H1 (cell line): ENCODE measurements at regions of chr11 and their contacts with region 1.

Region 1: DNA sequence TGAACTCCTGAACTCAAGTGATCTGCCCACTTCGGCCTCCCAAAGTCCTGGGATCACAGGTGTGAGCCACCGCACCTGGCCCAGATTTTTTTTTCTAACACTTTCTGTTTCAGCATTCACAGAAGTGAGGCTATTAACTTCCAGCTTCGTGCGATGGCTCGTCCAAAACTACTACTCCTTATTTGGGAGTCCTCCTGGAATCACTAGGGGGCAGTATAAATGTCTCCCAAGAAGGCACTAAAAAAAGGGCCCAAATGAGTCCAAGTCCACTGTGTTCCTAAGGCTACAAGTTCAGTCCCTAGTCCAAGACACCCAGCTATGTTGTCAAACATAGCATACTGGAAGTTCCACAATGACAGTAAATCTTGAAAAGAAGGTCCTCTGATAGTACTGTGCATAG is 63.2 kb upstream of the BIRC3 start:
- DNase-seq: no peak
- H3K4me3 ChIP-seq: no peak overlapping the region
- H3K27ac ChIP-seq: no peak overlapping the region
- H3K4me1 ChIP-seq: no peaks in the 10 kb centered on the region; a peak in 1 of 7 replicates
- H3K27me3 ChIP-seq: no peaks in the 10 kb centered on the region
- CTCF ChIP-seq: peak in 2 of 3 experiments; percentile 40 to 64; a peak in 2 of 4 replicates
- EP300 ChIP-seq: no peak
- POLR2A ChIP-seq: no peak
- RAD21 ChIP-seq: peak; percentile 44 to 47

Region 2: GRCh38 chr11:101860696-101861427 is 393.2 kb before region 1 on chr11:
- CTCF ChIA-PET with region 1: no interaction called
- POLR2A ChIA-PET with region 1: no interaction called
- DNase-seq: peak in 1 of 2 experiments; percentile 29
- H3K4me3 ChIP-seq: no peak overlapping the region
- H3K27ac ChIP-seq: no peak overlapping the region
- H3K4me1 ChIP-seq: no peaks in the 10 kb centered on the region
- H3K27me3 ChIP-seq: no peaks in the 10 kb centered on the region
- CTCF ChIP-seq: peak; percentile 46 to 74 (median 69)
- EP300 ChIP-seq: no peak
- POLR2A ChIP-seq: no peak
- RAD21 ChIP-seq: peak; percentile 61 to 68

Region 3: DNA sequence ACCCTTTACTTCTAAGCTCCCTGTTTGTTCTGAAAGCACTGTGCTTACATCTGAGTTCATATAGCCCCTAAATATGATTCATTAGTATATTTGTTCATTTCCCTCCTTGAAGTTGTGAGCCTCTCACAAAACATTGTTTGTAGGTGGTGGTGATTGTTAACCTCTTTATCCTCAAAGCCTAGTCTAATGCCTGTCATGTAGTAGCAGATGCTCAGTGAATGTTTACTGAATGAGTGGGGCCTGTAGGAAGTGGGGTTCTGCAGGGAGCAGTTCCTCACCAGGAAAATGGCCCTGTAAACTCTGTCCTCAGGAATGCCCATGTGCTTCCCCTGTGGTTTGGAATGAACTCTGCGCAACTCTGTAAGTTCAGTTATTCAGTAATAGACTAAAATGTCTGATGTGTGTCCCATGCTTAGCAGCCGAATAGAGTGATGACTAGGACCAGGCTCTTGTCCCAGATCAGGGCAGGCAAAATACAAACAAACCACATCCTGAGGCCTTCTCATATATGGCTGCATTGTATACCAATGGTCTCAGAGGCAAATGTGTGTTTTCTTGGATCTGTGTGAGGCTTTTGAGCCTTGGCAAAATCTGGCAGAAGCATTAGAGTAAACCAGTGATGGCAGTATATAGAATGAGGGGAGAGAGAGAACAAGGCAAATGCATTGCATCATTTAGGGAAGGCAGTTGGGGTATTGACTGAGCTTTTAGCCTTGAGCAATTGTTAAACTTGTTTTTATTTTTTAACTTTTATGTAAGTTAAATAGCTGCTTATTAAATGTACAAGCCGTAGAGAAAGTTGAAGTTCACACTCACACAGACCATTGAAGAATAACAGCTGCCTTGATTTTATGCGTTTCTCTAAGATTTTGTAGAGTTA is 28.1 kb before region 1 on chr11:
- CTCF ChIA-PET with region 1: interaction called, 12 read pairs
- POLR2A ChIA-PET with region 1: no interaction called
- DNase-seq: no peak
- H3K4me3 ChIP-seq: no peak overlapping the region
- H3K27ac ChIP-seq: no peak overlapping the region
- H3K4me1 ChIP-seq: peaks cover 0 to 5% (median 0%) of the 10 kb centered on the region in 4 experiments; a peak in 1 of 7 replicates
- H3K27me3 ChIP-seq: no peaks in the 10 kb centered on the region
- CTCF ChIP-seq: no peak
- EP300 ChIP-seq: no peak
- POLR2A ChIP-seq: no peak
- RAD21 ChIP-seq: no peak

Region 4: GRCh38 chr11:102237096-102237735 is 16.8 kb before region 1 on chr11:
- CTCF ChIA-PET with region 1: interaction called, 32 read pairs
- POLR2A ChIA-PET with region 1: no interaction called
- DNase-seq: no peak
- H3K4me3 ChIP-seq: no peak overlapping the region
- H3K27ac ChIP-seq: no peak overlapping the region
- H3K4me1 ChIP-seq: peaks cover 0 to 4% (median 3%) of the 10 kb centered on the region in 4 experiments
- H3K27me3 ChIP-seq: no peaks in the 10 kb centered on the region
- CTCF ChIP-seq: no peak
- EP300 ChIP-seq: no peak
- POLR2A ChIP-seq: no peak
- RAD21 ChIP-seq: no peak

Region 5: DNA sequence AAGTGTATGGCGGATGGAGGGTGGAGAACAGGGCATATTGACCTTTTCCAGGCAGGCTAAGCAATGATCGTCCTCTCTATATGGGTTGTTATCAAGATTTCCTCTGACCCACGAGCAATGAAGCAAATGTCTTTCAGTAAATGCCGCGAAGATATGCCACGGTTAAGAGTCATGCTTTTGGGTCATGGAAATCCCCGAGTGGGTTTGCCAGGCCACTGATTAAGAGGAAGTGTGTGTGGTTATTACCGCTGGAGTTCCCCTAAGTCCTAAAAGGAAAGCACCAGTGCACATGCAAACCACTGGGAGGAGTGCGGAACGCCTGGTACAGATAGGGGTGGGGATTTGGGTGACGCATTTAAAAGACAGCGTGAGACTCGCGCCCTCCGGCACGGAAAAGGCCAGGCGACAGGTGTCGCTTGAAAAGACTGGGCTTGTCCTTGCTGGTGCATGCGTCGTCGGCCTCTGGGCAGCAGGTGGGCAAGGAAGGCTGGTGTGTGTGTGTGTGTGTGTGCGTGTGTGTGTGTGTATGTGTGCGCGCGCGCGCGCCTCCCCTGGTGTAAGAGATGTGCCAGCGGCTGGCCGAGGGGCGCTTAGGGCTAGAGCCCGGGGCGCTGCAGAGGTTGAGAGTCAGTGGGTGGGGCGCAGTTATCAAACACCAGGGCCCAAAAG is 63.2 kb after region 1 on chr11 and contains the start of gene BIRC3:
- CTCF ChIA-PET with region 1: no interaction called
- POLR2A ChIA-PET with region 1: no interaction called
- DNase-seq: peak; percentile 21 to 80
- H3K4me3 ChIP-seq: peak within 1 kb of the TSS; percentile 29 to 63 (median 58)
- H3K27ac ChIP-seq: no peak within 1 kb of the TSS
- H3K4me1 ChIP-seq: peaks cover 0 to 1% (median 0%) of the 10 kb centered on the region in 4 experiments; a peak in 1 of 7 replicates
- H3K27me3 ChIP-seq: no peaks in the 10 kb centered on the region
- CTCF ChIP-seq: peak in 2 of 3 experiments; percentile 10 to 26; a peak in 3 of 4 replicates
- EP300 ChIP-seq: no peak
- POLR2A ChIP-seq: no peak
- RAD21 ChIP-seq: peak in 1 of 2 experiments; percentile 6; a peak in 1 of 4 replicates
- total RNA-seq, gene BIRC3: 0.15 and 0.20 TPM in 2 replicates